ENCODE measurements at regions of chr15 and their contacts with region 1.

Region 1: DNA sequence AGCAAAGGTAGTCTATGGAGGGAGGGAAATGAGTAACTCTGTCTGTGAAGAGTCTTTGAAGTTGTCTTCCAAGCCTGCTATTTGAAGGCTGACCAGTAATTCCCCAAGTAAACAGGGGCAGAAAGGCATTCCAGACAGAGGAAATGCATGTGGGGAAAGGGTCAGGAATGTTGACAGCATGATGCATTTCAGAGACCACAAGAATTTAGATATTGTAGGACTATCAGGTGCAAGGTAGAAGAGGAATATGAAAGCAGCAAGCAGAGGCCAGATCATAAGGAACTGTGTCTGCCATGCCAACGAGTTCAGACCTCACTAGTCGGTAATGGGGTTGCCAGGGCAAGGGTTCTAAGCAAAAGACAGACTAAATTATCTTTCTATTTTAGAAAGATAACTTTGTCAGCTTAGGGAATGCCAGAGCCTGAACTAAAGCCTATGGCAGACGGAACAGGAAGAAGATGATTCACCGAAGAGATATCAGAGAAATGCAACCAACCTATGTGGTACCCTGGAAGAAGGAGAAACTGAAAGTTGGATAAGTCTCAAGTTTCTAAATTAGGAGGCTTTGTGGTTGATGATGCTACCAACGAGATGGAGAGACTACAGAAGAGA is 327.0 kb upstream of the RORA start:
- DNase-seq: peak; percentile 7
- ATAC-seq: peak; percentile 51
- H3K4me3 ChIP-seq: no peak overlapping the region
- H3K27ac ChIP-seq: no peak overlapping the region
- H3K4me1 ChIP-seq: no peaks in the 10 kb centered on the region
- H3K27me3 ChIP-seq: no peaks in the 10 kb centered on the region; the same call in 1 of the 2 replicates
- CTCF ChIP-seq: no peak

Region 2: GRCh38 chr15:61575597-61575996 is 19.5 kb after region 1 on chr15:
- CTCF ChIA-PET with region 1: no interaction called
- POLR2A ChIA-PET with region 1: no interaction called
- in situ Hi-C with region 1: no loop called
- intact Hi-C with region 1: no loop called
- DNase-seq: no peak
- ATAC-seq: no peak
- H3K4me3 ChIP-seq: no peak overlapping the region
- H3K27ac ChIP-seq: no peak overlapping the region
- H3K4me1 ChIP-seq: no peaks in the 10 kb centered on the region
- H3K27me3 ChIP-seq: no peaks in the 10 kb centered on the region
- CTCF ChIP-seq: no peak

Region 3: GRCh38 chr15:61598655-61599054 is 42.5 kb after region 1 on chr15:
- CTCF ChIA-PET with region 1: no interaction called
- POLR2A ChIA-PET with region 1: interaction called, 7 read pairs
- in situ Hi-C with region 1: no loop called
- intact Hi-C with region 1: loop called (anchors 5 kb)
- DNase-seq: no peak
- ATAC-seq: no peak
- H3K4me3 ChIP-seq: no peak overlapping the region
- H3K27ac ChIP-seq: no peak overlapping the region
- H3K4me1 ChIP-seq: no peaks in the 10 kb centered on the region
- H3K27me3 ChIP-seq: no peaks in the 10 kb centered on the region
- CTCF ChIP-seq: no peak

Region 4: DNA sequence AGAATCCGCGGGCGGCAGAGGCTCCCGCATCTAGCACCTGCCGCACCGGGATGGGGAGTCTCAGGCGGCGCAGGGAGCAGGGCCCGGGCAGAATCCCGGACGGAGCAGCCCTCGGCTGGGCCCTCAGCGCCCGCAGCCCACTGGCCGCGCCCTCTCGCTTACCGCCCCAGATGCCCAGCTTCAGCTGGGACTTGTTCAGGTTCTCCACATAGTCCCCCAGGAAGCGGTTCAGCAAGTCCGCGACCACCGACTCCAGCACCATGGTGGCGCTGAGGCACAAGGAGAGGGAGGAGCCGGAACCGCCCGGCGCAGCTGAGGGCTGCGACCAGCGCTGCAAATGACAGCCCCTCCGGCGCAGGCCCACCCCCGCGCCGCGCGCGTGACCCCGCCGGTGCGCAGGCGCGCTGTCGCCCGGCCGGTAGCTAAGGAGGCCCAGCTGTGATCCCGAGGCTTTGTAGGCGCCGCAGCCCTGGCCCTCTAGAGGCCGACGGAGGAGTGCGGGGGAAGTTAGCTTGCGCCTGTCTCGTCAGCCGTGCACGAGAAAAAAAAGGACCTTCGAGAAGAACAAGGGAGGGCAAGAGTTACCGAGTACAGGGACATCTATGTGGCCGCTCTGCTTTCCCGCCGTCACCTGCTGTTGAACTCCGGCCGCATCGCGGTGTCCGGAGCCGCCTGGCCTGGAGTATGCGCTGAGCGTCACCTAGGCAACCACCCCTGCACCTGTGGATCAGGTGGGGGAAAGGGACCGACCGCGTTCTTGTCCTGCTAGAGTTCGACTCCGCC is 504.2 kb after region 1 on chr15 and contains the start of gene VPS13C:
- CTCF ChIA-PET with region 1: no interaction called
- POLR2A ChIA-PET with region 1: no interaction called
- in situ Hi-C with region 1: no loop called
- intact Hi-C with region 1: no loop called
- DNase-seq: peak; percentile 77
- ATAC-seq: peak; percentile 99
- H3K4me3 ChIP-seq: peak within 1 kb of the TSS; percentile 77 to 97
- H3K27ac ChIP-seq: peak within 1 kb of the TSS; percentile 89
- H3K4me1 ChIP-seq: peaks cover 7% of the 10 kb centered on the region
- H3K27me3 ChIP-seq: peaks cover 27% of the 10 kb centered on the region
- CTCF ChIP-seq: peak; percentile 88
- total RNA-seq, gene VPS13C: 47.3 TPM